Mammary epithelial cell (primary cell): ENCODE measurements at regions of chr7 and their contacts with region 1.

Region 1: GRCh38 chr7:2037808-2038522 is 194.8 kb downstream of the MAD1L1 start:
- DNase-seq: no peak
- H3K4me3 ChIP-seq: no peak overlapping the region
- H3K27ac ChIP-seq: no peak overlapping the region
- H3K4me1 ChIP-seq: peaks cover 8% of the 10 kb centered on the region
- H3K27me3 ChIP-seq: no peaks in the 10 kb centered on the region
- CTCF ChIP-seq: no peak

Region 2: GRCh38 chr7:2157468-2158279 is 119.7 kb after region 1 on chr7:
- CTCF ChIA-PET with region 1: no interaction called
- dilution Hi-C with region 1: loop called (anchors 10 kb)
- in situ Hi-C with region 1: no loop called
- intact Hi-C with region 1: no loop called
- DNase-seq: no peak
- H3K4me3 ChIP-seq: no peak overlapping the region
- H3K27ac ChIP-seq: no peak overlapping the region
- H3K4me1 ChIP-seq: no peaks in the 10 kb centered on the region
- H3K27me3 ChIP-seq: no peaks in the 10 kb centered on the region
- CTCF ChIP-seq: no peak